GM12878 (cell line): ENCODE measurements at regions of chr17 and their contacts with region 1.

Region 1: GRCh38 chr17:57084802-57085447 is at the start of gene AKAP1:
- DNase-seq: peak; percentile 72
- ATAC-seq: peak; percentile 84
- H3K4me3 ChIP-seq: peak within 1 kb of the TSS; percentile 89
- H3K27ac ChIP-seq: peak within 1 kb of the TSS; percentile 88
- H3K4me1 ChIP-seq: peaks cover 30% of the 10 kb centered on the region
- H3K27me3 ChIP-seq: no peaks in the 10 kb centered on the region
- CTCF ChIP-seq: peak in 2 of 3 experiments; percentile 19 to 51; a peak in 3 of 6 replicates
- EP300 ChIP-seq: no peak
- POLR2A ChIP-seq: peak; percentile 98
- RAD21 ChIP-seq: peak; percentile 25; the same call in 1 of the 2 replicates
- polyA plus RNA-seq, gene AKAP1: 11.9 to 15.2 TPM

Region 2: GRCh38 chr17:56960596-56961538 is 124.1 kb before region 1 on chr17 and contains the start of gene COIL:
- CTCF ChIA-PET with region 1: no interaction called
- POLR2A ChIA-PET with region 1: no interaction called
- RAD21 ChIA-PET with region 1: no interaction called
- SMC1A ChIA-PET with region 1: no interaction called
- in situ Hi-C with region 1: no loop called
- intact Hi-C with region 1: loop called (anchors 5 kb)
- DNase-seq: peak; percentile 65
- ATAC-seq: peak; percentile 99
- H3K4me3 ChIP-seq: peak within 1 kb of the TSS; percentile 95
- H3K27ac ChIP-seq: peak within 1 kb of the TSS; percentile 77
- H3K4me1 ChIP-seq: no peaks in the 10 kb centered on the region; the same call in 1 of the 2 replicates
- H3K27me3 ChIP-seq: no peaks in the 10 kb centered on the region
- CTCF ChIP-seq: peak; percentile 94 to 99 (median 97)
- EP300 ChIP-seq: no peak
- POLR2A ChIP-seq: peak; percentile 93
- RAD21 ChIP-seq: peak; percentile 64
- polyA plus RNA-seq, gene COIL: 14.2 to 16.8 TPM

Region 3: DNA sequence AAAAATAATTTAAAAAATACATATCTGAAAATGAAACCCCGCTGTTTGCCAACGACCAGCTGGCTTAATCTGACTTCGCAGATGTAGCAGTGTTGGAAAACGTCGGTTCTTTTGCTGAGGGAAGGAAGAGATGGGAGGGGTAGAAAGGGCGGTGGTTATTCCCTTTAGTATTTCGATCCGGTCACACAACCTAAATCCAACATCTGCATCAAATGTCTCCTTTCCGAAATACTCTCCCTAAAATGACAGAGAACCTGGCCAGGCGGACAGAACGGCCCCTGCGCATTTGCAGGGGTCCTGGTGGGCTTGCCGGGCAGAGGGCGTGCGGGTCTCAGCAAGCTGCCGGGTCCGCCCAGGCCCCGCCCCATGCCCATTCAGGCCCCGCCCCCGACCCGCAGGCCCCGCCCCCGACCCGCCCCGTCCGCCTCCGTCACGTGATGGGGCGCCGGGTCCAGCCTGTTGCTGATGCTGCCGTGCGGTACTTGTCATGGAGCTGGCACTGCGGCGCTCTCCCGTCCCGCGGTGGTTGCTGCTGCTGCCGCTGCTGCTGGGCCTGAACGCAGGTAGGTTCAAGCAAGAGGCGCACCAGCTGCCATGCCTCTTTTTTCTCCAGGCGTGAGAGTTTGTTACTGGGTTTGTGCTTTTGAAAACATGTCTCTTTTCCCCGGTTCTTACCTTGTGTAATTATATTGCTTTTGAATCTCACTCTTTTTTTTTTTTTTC is 107.1 kb before region 1 on chr17 and contains the start of gene SCPEP1:
- CTCF ChIA-PET with region 1: no interaction called
- POLR2A ChIA-PET with region 1: interaction called, 3 read pairs
- RAD21 ChIA-PET with region 1: interaction called, 5 read pairs
- SMC1A ChIA-PET with region 1: interaction called, 5 read pairs
- in situ Hi-C with region 1: no loop called
- intact Hi-C with region 1: loop called (anchors 5 kb)
- DNase-seq: no peak
- ATAC-seq: peak; percentile 95
- H3K4me3 ChIP-seq: peak within 1 kb of the TSS; percentile 77
- H3K27ac ChIP-seq: peak within 1 kb of the TSS; percentile 83
- H3K4me1 ChIP-seq: no peaks in the 10 kb centered on the region; the same call in 1 of the 2 replicates
- H3K27me3 ChIP-seq: no peaks in the 10 kb centered on the region
- CTCF ChIP-seq: peak in 1 of 3 experiments; percentile 4; a peak in 1 of 6 replicates
- EP300 ChIP-seq: no peak
- POLR2A ChIP-seq: peak; percentile 94
- RAD21 ChIP-seq: no peak
- polyA plus RNA-seq, gene SCPEP1: 57.7 to 80.2 TPM

Region 4: GRCh38 chr17:57195785-57196460 is 111.0 kb after region 1 on chr17:
- CTCF ChIA-PET with region 1: no interaction called
- POLR2A ChIA-PET with region 1: no interaction called
- RAD21 ChIA-PET with region 1: no interaction called
- SMC1A ChIA-PET with region 1: no interaction called
- in situ Hi-C with region 1: no loop called
- intact Hi-C with region 1: no loop called
- DNase-seq: no peak
- ATAC-seq: no peak; the same call in 2 of the 3 replicates
- H3K4me3 ChIP-seq: no peak overlapping the region
- H3K27ac ChIP-seq: no peak overlapping the region
- H3K4me1 ChIP-seq: no peaks in the 10 kb centered on the region
- H3K27me3 ChIP-seq: peaks cover 0 to 4% of the 10 kb centered on the region in 2 experiments; a peak in 1 of 4 replicates
- CTCF ChIP-seq: no peak
- EP300 ChIP-seq: no peak
- POLR2A ChIP-seq: no peak
- RAD21 ChIP-seq: no peak